ENCODE measurements at regions of chr6 and their contacts with region 1.

Region 1: DNA sequence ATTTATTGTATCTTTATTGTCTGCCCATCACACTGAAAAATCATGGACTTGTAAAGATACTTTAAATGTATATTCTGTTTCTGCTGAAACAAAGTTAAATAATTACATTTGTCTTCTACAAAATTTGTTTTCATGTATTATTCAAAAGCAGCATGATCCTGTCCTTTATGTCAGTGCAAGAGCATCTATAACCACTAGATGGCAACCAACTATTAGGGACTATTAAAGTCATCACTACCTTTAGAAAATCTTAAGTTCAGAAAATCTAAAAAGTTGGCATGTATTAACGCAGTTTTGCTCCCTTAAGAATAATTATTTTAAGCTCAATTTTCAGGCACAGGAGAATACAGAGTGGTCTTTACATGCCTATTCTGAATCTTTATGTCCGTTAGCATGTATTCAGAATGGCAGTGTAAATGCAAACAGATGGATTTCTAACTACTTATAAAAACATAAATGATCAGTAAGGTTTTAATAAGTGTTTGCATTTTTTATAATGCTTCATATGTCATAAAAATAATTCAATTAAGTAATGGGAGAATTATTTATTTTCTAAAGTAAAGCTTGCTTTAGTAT is 17.8 kb downstream of the TMEM30A start:
- DNase-seq: no peak
- H3K4me3 ChIP-seq: no peak overlapping the region
- H3K27ac ChIP-seq: no peak overlapping the region
- H3K4me1 ChIP-seq: peaks cover 0 to 31% (median 19%) of the 10 kb centered on the region in 4 donors
- H3K27me3 ChIP-seq: no peaks in the 10 kb centered on the region
- CTCF ChIP-seq: peak; percentile 62 to 84 (median 75)
- EP300 ChIP-seq: no peak
- POLR2A ChIP-seq: no peak

Region 2: GRCh38 chr6:75532515-75532914 is 265.7 kb after region 1 on chr6:
- in situ Hi-C with region 1: loop called in 1 of 4 experiments (anchors 10 kb)
- intact Hi-C with region 1: loop called (anchors 10 kb)
- DNase-seq: no peak
- H3K4me3 ChIP-seq: no peak overlapping the region
- H3K27ac ChIP-seq: no peak overlapping the region
- H3K4me1 ChIP-seq: peaks cover 0 to 4% (median 0%) of the 10 kb centered on the region in 4 donors
- H3K27me3 ChIP-seq: no peaks in the 10 kb centered on the region
- CTCF ChIP-seq: no peak
- EP300 ChIP-seq: no peak
- POLR2A ChIP-seq: no peak